HepG2 (cell line): ENCODE measurements at regions of chr16 and their contacts with region 1.

Region 1: DNA sequence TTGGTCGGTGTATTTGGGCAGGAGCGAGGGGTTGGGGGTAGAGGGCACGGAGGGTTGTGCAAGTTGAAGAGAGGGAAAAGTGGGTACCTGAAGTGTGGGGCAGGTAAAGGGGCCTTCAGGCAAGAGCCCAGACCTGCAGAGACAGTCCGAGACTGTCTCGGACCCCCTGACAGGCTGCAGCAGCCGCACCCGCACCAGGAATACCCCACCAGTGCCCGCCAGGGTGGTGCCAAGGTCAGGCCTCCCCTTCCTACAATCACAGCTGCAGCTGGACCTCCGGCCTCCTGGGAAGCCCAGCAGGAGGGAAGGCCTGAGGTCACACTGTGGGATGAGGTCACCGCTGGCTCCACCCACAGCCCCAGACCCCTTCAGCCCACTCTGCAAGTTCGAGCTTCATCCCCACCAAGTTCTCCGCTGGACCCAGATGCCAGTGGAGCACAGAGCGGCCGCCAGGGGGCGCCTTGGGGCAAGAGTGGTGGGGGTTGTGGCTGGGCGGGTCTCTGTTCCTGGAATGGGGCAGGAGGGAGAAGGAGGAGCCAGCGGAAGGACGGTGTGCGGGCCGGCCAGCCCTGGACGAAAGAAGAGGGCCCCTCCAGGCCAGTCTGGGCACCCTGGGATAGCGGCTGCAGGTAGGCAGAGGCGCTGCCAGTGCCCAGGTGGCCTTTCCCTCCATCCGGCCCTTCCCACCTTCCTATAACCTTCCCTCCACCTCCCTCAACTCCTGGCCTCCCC is at the start of gene HSD3B7:
- DNase-seq: peak; percentile 80
- ATAC-seq: peak; percentile 78
- H3K4me3 ChIP-seq: peak within 1 kb of the TSS; percentile 41 to 72 (median 54)
- H3K27ac ChIP-seq: peak within 1 kb of the TSS; percentile 49
- H3K4me1 ChIP-seq: peaks cover 16% of the 10 kb centered on the region
- H3K27me3 ChIP-seq: no peaks in the 10 kb centered on the region
- CTCF ChIP-seq: peak; percentile 95
- EP300 ChIP-seq: 0 out of 4 replicates have a peak, but pooled peaks of 1 of the 2 experiments have one; percentile 21
- POLR2A ChIP-seq: peak; percentile 47 to 58; a peak in 3 of 4 replicates
- RAD21 ChIP-seq: peak; percentile 90
- total RNA-seq, gene HSD3B7: 58.8 and 69.7 TPM in 2 replicates

Region 2: GRCh38 chr16:30957456-30958174 is 27.2 kb before region 1 on chr16 and contains the start of gene SETD1A:
- CTCF ChIA-PET with region 1: no interaction called
- POLR2A ChIA-PET with region 1: interaction called, 16 read pairs
- in situ Hi-C with region 1: no loop called
- intact Hi-C with region 1: loop called (anchors 1 kb)
- DNase-seq: peak; percentile 93
- ATAC-seq: peak; percentile 65
- H3K4me3 ChIP-seq: peak within 1 kb of the TSS; percentile 84 to 98 (median 93)
- H3K27ac ChIP-seq: peak within 1 kb of the TSS; percentile 97
- H3K4me1 ChIP-seq: peaks cover 56% of the 10 kb centered on the region
- H3K27me3 ChIP-seq: no peaks in the 10 kb centered on the region; a peak in 1 of 5 replicates
- CTCF ChIP-seq: 0 out of 2 replicates have a peak, but pooled peaks have one; percentile 4
- EP300 ChIP-seq: peak in 1 of 2 experiments; percentile 35; a peak in 2 of 4 replicates
- POLR2A ChIP-seq: no peak; a peak in 2 of 4 replicates
- RAD21 ChIP-seq: peak; percentile 47; the same call in 1 of the 2 replicates
- total RNA-seq, gene SETD1A: 3.6 and 5.6 TPM in 2 replicates

Region 3: DNA sequence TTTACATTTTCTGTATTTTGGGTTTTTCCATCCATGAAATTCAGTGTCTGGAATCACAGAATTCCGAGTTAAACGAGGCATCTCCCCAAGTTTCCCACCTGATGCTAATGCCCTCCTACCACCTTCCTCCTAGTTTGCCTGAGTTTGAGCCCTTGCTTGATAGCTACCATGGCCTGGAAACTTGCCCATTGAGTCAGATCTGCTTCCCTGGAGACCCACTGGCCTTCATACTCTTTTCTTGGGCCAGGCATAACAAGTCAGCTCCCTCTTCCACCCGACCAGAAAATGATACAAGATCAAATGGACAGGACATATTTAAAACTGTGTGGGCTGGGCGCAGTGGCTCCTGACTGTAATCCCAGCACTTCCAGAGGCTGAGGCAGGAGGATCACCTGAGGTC is 17.0 kb before region 1 on chr16:
- CTCF ChIA-PET with region 1: no interaction called
- POLR2A ChIA-PET with region 1: no interaction called
- in situ Hi-C with region 1: no loop called
- intact Hi-C with region 1: no loop called
- DNase-seq: no peak
- ATAC-seq: no peak
- H3K4me3 ChIP-seq: no peak overlapping the region
- H3K27ac ChIP-seq: no peak overlapping the region
- H3K4me1 ChIP-seq: no peaks in the 10 kb centered on the region
- H3K27me3 ChIP-seq: no peaks in the 10 kb centered on the region
- CTCF ChIP-seq: no peak
- EP300 ChIP-seq: no peak
- POLR2A ChIP-seq: no peak
- RAD21 ChIP-seq: no peak

Region 4: GRCh38 chr16:31016018-31016417 is 31.2 kb after region 1 on chr16:
- CTCF ChIA-PET with region 1: interaction called, 29 read pairs
- POLR2A ChIA-PET with region 1: interaction called, 5 read pairs
- in situ Hi-C with region 1: no loop called
- intact Hi-C with region 1: loop called (anchors 1 kb)
- DNase-seq: peak; percentile 82
- ATAC-seq: peak; percentile 92
- H3K4me3 ChIP-seq: no peak overlapping the region
- H3K27ac ChIP-seq: no peak overlapping the region
- H3K4me1 ChIP-seq: peaks cover 17% of the 10 kb centered on the region
- H3K27me3 ChIP-seq: peaks cover 2 to 19% of the 10 kb centered on the region in 2 experiments
- CTCF ChIP-seq: peak; percentile 94
- EP300 ChIP-seq: no peak
- POLR2A ChIP-seq: no peak
- RAD21 ChIP-seq: peak; percentile 86

Region 5: GRCh38 chr16:31073968-31074813 is 89.4 kb after region 1 on chr16 and contains the starts of genes ZNF646 and ZNF668:
- CTCF ChIA-PET with region 1: interaction called, 8 read pairs
- POLR2A ChIA-PET with region 1: interaction called, 36 read pairs
- in situ Hi-C with region 1: loop called (anchors 5 kb)
- intact Hi-C with region 1: no loop called
- DNase-seq: peak; percentile 99
- ATAC-seq: peak; percentile 86
- H3K4me3 ChIP-seq: peak within 1 kb of the TSS; percentile 75 to 97 (median 90)
- H3K27ac ChIP-seq: peak within 1 kb of the TSS; percentile 83
- H3K4me1 ChIP-seq: peaks cover 22% of the 10 kb centered on the region
- H3K27me3 ChIP-seq: no peaks in the 10 kb centered on the region; a peak in 1 of 5 replicates
- CTCF ChIP-seq: no peak; the same call in 1 of the 2 replicates
- EP300 ChIP-seq: peak in 1 of 2 experiments; percentile 34; a peak in 1 of 4 replicates
- POLR2A ChIP-seq: peak; percentile 84 to 90
- RAD21 ChIP-seq: peak; percentile 71
- total RNA-seq, gene ZNF646: 7.8 and 10.9 TPM in 2 replicates
- total RNA-seq, gene ZNF668: 7.5 and 9.8 TPM in 2 replicates

Region 6: DNA sequence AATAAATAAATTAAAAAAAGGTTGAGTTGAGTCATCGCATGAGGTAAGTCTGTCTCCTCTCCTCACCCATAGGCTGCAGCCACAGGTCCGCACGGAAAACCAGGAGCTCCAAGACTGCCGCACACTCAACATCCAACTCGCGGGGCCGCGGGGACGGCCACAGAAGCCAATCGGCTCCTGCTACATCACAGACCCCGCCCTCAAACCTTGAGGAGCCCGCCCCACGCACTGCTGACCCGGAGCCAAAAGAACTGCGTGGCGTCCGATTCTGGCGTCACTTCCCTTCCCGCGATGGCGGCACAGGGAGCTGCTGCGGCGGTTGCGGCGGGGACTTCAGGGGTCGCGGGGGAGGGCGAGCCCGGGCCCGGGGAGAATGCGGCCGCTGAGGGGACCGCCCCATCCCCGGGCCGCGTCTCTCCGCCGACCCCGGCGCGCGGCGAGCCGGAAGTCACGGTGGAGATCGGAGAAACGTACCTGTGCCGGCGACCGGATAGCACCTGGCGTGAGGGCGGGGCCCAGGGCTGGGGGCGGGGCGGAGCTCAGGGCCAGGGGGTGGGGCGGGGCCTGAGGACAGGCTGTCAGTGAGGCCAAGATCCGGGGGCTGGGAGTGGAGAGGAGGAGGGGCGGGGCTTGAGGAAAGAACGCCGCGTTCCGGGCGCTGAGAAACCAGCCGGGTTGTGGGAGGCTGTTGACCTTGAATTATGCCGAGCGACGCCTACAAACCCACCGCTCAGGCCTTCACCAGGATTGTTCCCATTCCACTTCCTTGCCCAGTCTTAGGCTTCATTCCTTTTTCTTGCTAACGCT is 132.8 kb after region 1 on chr16 and contains the start of gene KAT8:
- CTCF ChIA-PET with region 1: no interaction called
- POLR2A ChIA-PET with region 1: interaction called, 26 read pairs
- in situ Hi-C with region 1: no loop called
- intact Hi-C with region 1: no loop called
- DNase-seq: peak; percentile 99
- ATAC-seq: peak; percentile 93
- H3K4me3 ChIP-seq: peak within 1 kb of the TSS; percentile 67 to 83 (median 81)
- H3K27ac ChIP-seq: peak within 1 kb of the TSS; percentile 70
- H3K4me1 ChIP-seq: peaks cover 36% of the 10 kb centered on the region
- H3K27me3 ChIP-seq: no peaks in the 10 kb centered on the region; a peak in 1 of 5 replicates
- CTCF ChIP-seq: peak; percentile 10; the same call in 1 of the 2 replicates
- EP300 ChIP-seq: 0 out of 4 replicates have a peak, but pooled peaks of 1 of the 2 experiments have one; percentile 8
- POLR2A ChIP-seq: peak; percentile 80 to 94
- RAD21 ChIP-seq: peak; percentile 24; the same call in 1 of the 2 replicates
- total RNA-seq, gene KAT8: 69.5 and 79.0 TPM in 2 replicates

Region 7: GRCh38 chr16:31440516-31441184 is 455.8 kb after region 1 on chr16:
- CTCF ChIA-PET with region 1: interaction called, 9 read pairs
- POLR2A ChIA-PET with region 1: interaction called, 4 read pairs
- in situ Hi-C with region 1: no loop called
- intact Hi-C with region 1: loop called (anchors 1 kb)
- DNase-seq: no peak
- ATAC-seq: no peak
- H3K4me3 ChIP-seq: no peak overlapping the region
- H3K27ac ChIP-seq: no peak overlapping the region
- H3K4me1 ChIP-seq: peaks cover 6% of the 10 kb centered on the region; the same call in 1 of the 2 replicates
- H3K27me3 ChIP-seq: peaks cover 0 to 17% of the 10 kb centered on the region in 2 experiments; a peak in 2 of 5 replicates
- CTCF ChIP-seq: no peak
- EP300 ChIP-seq: no peak
- POLR2A ChIP-seq: no peak
- RAD21 ChIP-seq: no peak

Region 8: GRCh38 chr16:31868691-31869167 is 883.9 kb after region 1 on chr16:
- CTCF ChIA-PET with region 1: interaction called, 10 read pairs
- POLR2A ChIA-PET with region 1: interaction called, 3 read pairs
- in situ Hi-C with region 1: loop called (anchors 10 kb)
- intact Hi-C with region 1: loop called (anchors 10 kb)
- DNase-seq: peak; percentile 76
- ATAC-seq: peak; percentile 70
- H3K4me3 ChIP-seq: no peak overlapping the region
- H3K27ac ChIP-seq: no peak overlapping the region
- H3K4me1 ChIP-seq: peaks cover 24% of the 10 kb centered on the region
- H3K27me3 ChIP-seq: peaks cover 0 to 19% of the 10 kb centered on the region in 2 experiments; a peak in 2 of 5 replicates
- CTCF ChIP-seq: peak; percentile 83
- EP300 ChIP-seq: no peak
- POLR2A ChIP-seq: no peak
- RAD21 ChIP-seq: peak; percentile 51; the same call in 1 of the 2 replicates